Activated CD4-positive, alpha-beta T cell treated with anti-CD3 and anti-CD28 coated beads, Interleukin-2, amount 10 ng/mL, durations not matched to agents 24 days and 14 days (primary cell): ENCODE measurements at regions of chr3 and their contacts with region 1.

Region 1: DNA sequence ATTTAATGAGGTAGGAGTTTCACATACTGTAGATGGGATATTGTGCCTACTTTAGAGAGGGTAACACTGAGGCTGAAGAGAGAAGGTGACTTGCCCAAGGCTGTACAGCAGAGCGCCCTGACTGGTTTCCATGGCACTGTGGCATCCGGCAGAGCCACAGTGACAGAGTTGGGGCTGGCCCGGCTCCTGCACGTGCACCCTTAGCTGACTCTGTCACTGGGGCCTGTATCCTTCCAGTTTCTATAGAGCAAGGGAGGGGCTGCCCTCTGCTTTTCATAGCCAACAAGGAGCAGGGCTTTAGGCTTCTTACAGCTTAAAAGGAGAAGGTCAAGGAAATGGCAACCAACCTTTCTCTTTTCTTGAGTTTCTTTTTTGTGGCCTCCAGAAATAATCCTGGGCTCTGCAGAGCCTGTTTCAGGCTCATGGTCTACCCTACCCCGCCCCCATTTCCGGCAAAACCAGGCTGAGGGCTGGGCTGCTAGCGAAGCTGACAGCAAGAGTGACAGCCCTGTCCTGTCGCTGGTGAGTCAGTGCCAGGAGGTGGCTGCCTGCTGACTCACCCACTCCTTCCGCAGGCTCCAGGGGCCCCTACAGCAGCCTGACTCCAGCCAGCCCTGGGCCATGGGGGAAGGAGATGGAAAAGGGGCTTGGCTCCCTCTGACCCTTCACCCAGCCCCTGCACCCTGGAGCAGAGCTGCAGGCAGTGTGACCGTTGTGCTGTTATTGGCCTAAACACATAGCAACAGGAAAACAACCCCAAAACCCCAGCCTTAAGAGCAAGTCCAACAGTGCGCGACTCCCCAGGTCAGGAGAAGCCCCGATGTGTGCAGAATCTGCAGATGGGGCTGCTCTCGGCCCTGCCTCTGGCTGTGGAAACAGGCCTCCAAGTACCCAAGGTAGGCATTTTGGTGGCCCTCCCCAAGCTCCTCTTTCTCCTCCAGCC is 29.8 kb downstream of the SLC6A6 start:
- DNase-seq: peak; percentile 98
- H3K4me3 Mint-ChIP-seq: peak overlapping the region; percentile 80
- H3K27ac Mint-ChIP-seq: peak overlapping the region; percentile 97
- H3K4me1 Mint-ChIP-seq: peaks cover 73% of the 10 kb centered on the region
- H3K27me3 Mint-ChIP-seq: no peaks in the 10 kb centered on the region

Region 2: GRCh38 chr3:14124615-14125190 is 307.5 kb before region 1 on chr3 and contains the starts of genes CHCHD4 and TMEM43:
- intact Hi-C with region 1: loop called (anchors 1 kb)
- DNase-seq: peak; percentile 99
- H3K4me3 Mint-ChIP-seq: peak within 1 kb of the TSS; percentile 98
- H3K27ac Mint-ChIP-seq: peak within 1 kb of the TSS; percentile 95
- H3K4me1 Mint-ChIP-seq: peaks cover 54% of the 10 kb centered on the region
- H3K27me3 Mint-ChIP-seq: no peaks in the 10 kb centered on the region
- total RNA-seq, gene CHCHD4: 27.7 and 29.6 TPM in 2 replicates
- total RNA-seq, gene TMEM43: 38.7 and 39.4 TPM in 2 replicates

Region 3: GRCh38 chr3:14402304-14402811 is 29.8 kb before region 1 on chr3 and contains the start of gene SLC6A6:
- intact Hi-C with region 1: loop called (anchors 1 kb)
- DNase-seq: peak; percentile 98
- H3K4me3 Mint-ChIP-seq: peak within 1 kb of the TSS; percentile 99
- H3K27ac Mint-ChIP-seq: peak within 1 kb of the TSS; percentile 97
- H3K4me1 Mint-ChIP-seq: peaks cover 43% of the 10 kb centered on the region
- H3K27me3 Mint-ChIP-seq: no peaks in the 10 kb centered on the region
- total RNA-seq, gene SLC6A6: 53.9 and 63.7 TPM in 2 replicates

Region 4: GRCh38 chr3:14461748-14462324 is 29.7 kb after region 1 on chr3:
- intact Hi-C with region 1: loop called (anchors 1 kb)
- DNase-seq: peak; percentile 80
- H3K4me3 Mint-ChIP-seq: no peak overlapping the region
- H3K27ac Mint-ChIP-seq: peak overlapping the region; percentile 74
- H3K4me1 Mint-ChIP-seq: peaks cover 18% of the 10 kb centered on the region
- H3K27me3 Mint-ChIP-seq: no peaks in the 10 kb centered on the region

Region 5: GRCh38 chr3:14947886-14948555 is 515.9 kb after region 1 on chr3:
- intact Hi-C with region 1: loop called (anchors 5 kb)
- DNase-seq: peak; percentile 99
- H3K4me3 Mint-ChIP-seq: peak overlapping the region; percentile 100
- H3K27ac Mint-ChIP-seq: peak overlapping the region; percentile 100
- H3K4me1 Mint-ChIP-seq: peaks cover 32% of the 10 kb centered on the region
- H3K27me3 Mint-ChIP-seq: no peaks in the 10 kb centered on the region